ENCODE measurements at regions of chr10 and their contacts with region 1.

Region 1: GRCh38 chr10:102678842-102679289 is 34.6 kb downstream of the TRIM8 start:
- DNase-seq: peak; percentile 53
- ATAC-seq: no peak
- H3K4me3 Mint-ChIP-seq: no peak overlapping the region
- H3K27ac Mint-ChIP-seq: no peak overlapping the region
- H3K4me1 Mint-ChIP-seq: peaks cover 45% of the 10 kb centered on the region
- H3K27me3 Mint-ChIP-seq: no peaks in the 10 kb centered on the region

Region 2: GRCh38 chr10:102660888-102661657 is 17.8 kb before region 1 on chr10:
- CTCF ChIA-PET with region 1: interaction called, 12 read pairs
- POLR2A ChIA-PET with region 1: interaction called, 3 read pairs
- intact Hi-C with region 1: no loop called
- DNase-seq: peak; percentile 88
- ATAC-seq: peak; percentile 82
- H3K4me3 Mint-ChIP-seq: peak overlapping the region; percentile 48
- H3K27ac Mint-ChIP-seq: peak overlapping the region; percentile 80
- H3K4me1 Mint-ChIP-seq: peaks cover 45% of the 10 kb centered on the region
- H3K27me3 Mint-ChIP-seq: no peaks in the 10 kb centered on the region

Region 3: DNA sequence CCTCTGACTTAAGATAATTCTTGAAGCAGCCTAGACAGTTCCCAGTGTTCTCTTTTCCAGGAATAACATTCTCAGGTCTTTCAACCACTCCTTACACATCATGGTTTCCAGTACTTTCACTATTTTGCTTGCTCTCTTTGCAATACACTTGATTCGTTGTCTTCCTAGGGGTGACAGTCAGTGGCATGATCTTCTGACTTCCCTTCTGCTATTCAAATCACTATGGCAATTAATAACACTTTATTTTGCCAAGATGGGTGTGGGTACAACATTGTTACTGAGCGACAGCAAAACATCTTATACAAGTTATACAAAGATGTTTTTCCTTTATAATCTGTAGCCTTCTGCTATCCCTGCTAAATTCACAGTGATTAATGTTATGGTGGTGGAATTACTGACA is 20.0 kb after region 1 on chr10:
- CTCF ChIA-PET with region 1: interaction called, 3 read pairs
- POLR2A ChIA-PET with region 1: no interaction called
- intact Hi-C with region 1: loop called in 1 of 2 experiments (anchors 2 kb)
- DNase-seq: no peak
- ATAC-seq: no peak
- H3K4me3 Mint-ChIP-seq: no peak overlapping the region
- H3K27ac Mint-ChIP-seq: no peak overlapping the region
- H3K4me1 Mint-ChIP-seq: no peaks in the 10 kb centered on the region
- H3K27me3 Mint-ChIP-seq: no peaks in the 10 kb centered on the region

Region 4: GRCh38 chr10:102713814-102714620 is 35.2 kb after region 1 on chr10 and contains the start of gene ARL3:
- CTCF ChIA-PET with region 1: interaction called, 22 read pairs
- POLR2A ChIA-PET with region 1: no interaction called
- intact Hi-C with region 1: loop called (anchors 1 to 5 kb)
- DNase-seq: peak; percentile 99
- ATAC-seq: peak; percentile 90
- H3K4me3 Mint-ChIP-seq: peak within 1 kb of the TSS; percentile 82
- H3K27ac Mint-ChIP-seq: peak within 1 kb of the TSS; percentile 81
- H3K4me1 Mint-ChIP-seq: peaks cover 59% of the 10 kb centered on the region
- H3K27me3 Mint-ChIP-seq: no peaks in the 10 kb centered on the region
- total RNA-seq, gene ARL3: 6.4 to 6.9 TPM